Body of pancreas (tissue), 4 donors: ENCODE measurements at regions of chr17 and their contacts with region 1.

Region 1: GRCh38 chr17:58710936-58711775 is 18.8 kb downstream of the RAD51C start:
- DNase-seq: peak; percentile 24 to 63 (median 46)
- ATAC-seq: no peak
- H3K4me3 ChIP-seq: no peak overlapping the region
- H3K27ac ChIP-seq: no peak overlapping the region
- H3K4me1 ChIP-seq: no peaks in the 10 kb centered on the region
- H3K27me3 ChIP-seq: no peaks in the 10 kb centered on the region
- CTCF ChIP-seq: peak; percentile 25 to 83 (median 64)
- POLR2A ChIP-seq: no peak

Region 2: GRCh38 chr17:58455491-58455890 is 255.7 kb before region 1 on chr17:
- intact Hi-C with region 1: no loop called
- DNase-seq: no peak
- ATAC-seq: no peak
- H3K4me3 ChIP-seq: no peak overlapping the region
- H3K27ac ChIP-seq: no peak overlapping the region
- H3K4me1 ChIP-seq: no peaks in the 10 kb centered on the region
- H3K27me3 ChIP-seq: no peaks in the 10 kb centered on the region
- CTCF ChIP-seq: no peak
- POLR2A ChIP-seq: no peak

Region 3: GRCh38 chr17:59010026-59010425 is 298.9 kb after region 1 on chr17:
- intact Hi-C with region 1: loop called (anchors 10 kb)
- DNase-seq: no peak
- ATAC-seq: no peak
- H3K4me3 ChIP-seq: no peak overlapping the region
- H3K27ac ChIP-seq: no peak overlapping the region
- H3K4me1 ChIP-seq: peaks cover 20% of the 10 kb centered on the region
- H3K27me3 ChIP-seq: no peaks in the 10 kb centered on the region
- CTCF ChIP-seq: no peak
- POLR2A ChIP-seq: no peak